ENCODE measurements at regions of chr22 and their contacts with region 1.

Region 1: DNA sequence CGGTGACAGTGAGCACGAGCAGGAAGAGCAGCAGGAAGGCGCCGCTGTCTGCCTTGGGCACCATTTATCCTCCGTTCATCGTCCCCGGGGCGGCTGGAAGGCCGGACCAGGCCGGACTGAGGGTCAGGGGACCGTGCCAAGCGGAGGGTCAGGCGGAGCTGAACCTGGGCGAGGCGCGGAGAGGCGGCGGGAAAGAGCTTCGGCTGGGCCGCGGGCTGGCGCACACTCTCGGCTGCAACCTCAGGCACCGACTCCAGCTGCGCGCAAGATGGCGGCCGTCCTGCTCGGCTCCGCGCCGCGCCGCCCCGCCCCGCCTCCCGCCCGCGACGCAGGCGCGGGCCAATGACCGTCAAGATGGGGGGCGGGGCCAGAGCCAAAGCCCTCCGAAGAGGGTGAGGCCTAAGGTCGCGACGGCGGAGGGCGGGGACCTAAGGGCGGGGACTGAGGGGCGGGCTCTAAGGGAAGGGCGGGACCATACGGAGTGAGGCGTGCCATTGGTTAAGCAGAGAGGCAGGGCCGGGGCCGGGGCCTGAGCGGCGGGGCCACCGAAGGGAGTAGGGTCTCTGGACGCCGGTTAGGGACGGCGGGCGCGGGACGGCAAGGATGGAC is at the start of gene DGCR2:
- DNase-seq: peak; percentile 98
- H3K4me3 ChIP-seq: peak within 1 kb of the TSS; percentile 81 to 96 (median 90)
- H3K27ac ChIP-seq: peak within 1 kb of the TSS; percentile 93 to 96 (median 94)
- H3K4me1 ChIP-seq: peaks cover 0 to 49% (median 46%) of the 10 kb centered on the region in 4 donors
- H3K27me3 ChIP-seq: no peaks in the 10 kb centered on the region
- CTCF ChIP-seq: no peak
- EP300 ChIP-seq: no peak
- POLR2A ChIP-seq: peak; percentile 14 to 35
- total RNA-seq, gene DGCR2: 25.5 to 36.8 (median 32.7) TPM

Region 2: DNA sequence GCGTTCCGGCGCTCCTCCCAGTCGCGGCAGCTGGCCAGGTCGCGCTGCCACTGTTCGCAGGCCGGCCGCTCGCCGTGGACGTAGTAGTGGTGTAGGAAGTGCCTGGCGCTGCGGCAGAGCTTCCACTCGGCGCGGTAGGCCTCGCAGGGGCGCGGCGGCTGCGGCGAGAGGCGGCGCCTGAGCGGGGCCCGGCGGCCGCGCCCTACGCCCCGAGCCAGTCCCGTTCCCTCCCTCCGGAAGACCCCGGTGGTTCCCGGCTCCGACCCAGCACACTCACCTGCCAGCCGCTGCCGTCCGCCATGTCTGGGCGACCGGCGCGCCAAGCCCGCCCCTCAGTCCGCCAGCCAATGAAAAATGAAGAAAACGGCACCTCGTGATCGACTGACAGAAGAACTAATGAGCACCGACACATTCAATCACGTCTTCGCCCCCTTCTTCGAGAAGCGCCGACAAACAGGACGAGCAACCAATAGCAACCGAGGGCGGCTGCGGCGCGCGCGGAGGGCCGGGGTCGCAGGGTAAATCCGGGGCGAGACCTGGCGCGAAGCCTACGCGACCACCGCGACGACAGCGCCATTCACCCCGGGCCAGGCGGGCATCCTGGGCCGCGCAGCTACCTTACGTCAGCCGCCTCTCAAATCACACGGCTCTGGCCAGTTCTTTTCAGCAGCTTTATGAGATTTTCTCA is 325.3 kb after region 1 on chr22 and contains the start of gene C22orf39:
- intact Hi-C with region 1: loop called (anchors 5 kb)
- DNase-seq: peak; percentile 96
- H3K4me3 ChIP-seq: peak within 1 kb of the TSS; percentile 64 to 94 (median 72)
- H3K27ac ChIP-seq: peak within 1 kb of the TSS; percentile 88 to 93 (median 92)
- H3K4me1 ChIP-seq: peaks cover 0 to 27% (median 23%) of the 10 kb centered on the region in 4 donors
- H3K27me3 ChIP-seq: no peaks in the 10 kb centered on the region
- CTCF ChIP-seq: no peak
- EP300 ChIP-seq: peak in 1 of 4 donors; percentile 12
- POLR2A ChIP-seq: peak; percentile 53 to 63
- total RNA-seq, gene C22orf39: 88.1 to 135 (median 102) TPM

Region 3: GRCh38 chr22:19460036-19460435 is 337.8 kb after region 1 on chr22:
- intact Hi-C with region 1: no loop called
- DNase-seq: no peak
- H3K4me3 ChIP-seq: no peak overlapping the region
- H3K27ac ChIP-seq: no peak overlapping the region
- H3K4me1 ChIP-seq: no peaks in the 10 kb centered on the region
- H3K27me3 ChIP-seq: no peaks in the 10 kb centered on the region
- CTCF ChIP-seq: no peak
- EP300 ChIP-seq: no peak
- POLR2A ChIP-seq: no peak

Region 4: GRCh38 chr22:19479357-19480172 is 357.3 kb after region 1 on chr22 and contains the start of gene CDC45:
- intact Hi-C with region 1: loop called (anchors 5 kb)
- DNase-seq: peak; percentile 98
- H3K4me3 ChIP-seq: peak within 1 kb of the TSS; percentile 82 to 97 (median 86)
- H3K27ac ChIP-seq: peak within 1 kb of the TSS; percentile 87 to 94 (median 91)
- H3K4me1 ChIP-seq: peaks cover 0 to 35% (median 21%) of the 10 kb centered on the region in 4 donors
- H3K27me3 ChIP-seq: no peaks in the 10 kb centered on the region
- CTCF ChIP-seq: no peak
- EP300 ChIP-seq: no peak
- POLR2A ChIP-seq: no peak
- total RNA-seq, gene CDC45: 0.14 TPM in 1 of 4 donors, not detected in the others

Measured in sigmoid colon (tissue), 7 donors.